Posterior vena cava (tissue), 2 donors: ENCODE measurements at regions of chrX and their contacts with region 1.

Region 1: GRCh38 chrX:87468941-87469340 is 48.7 kb upstream of the KLHL4 start:
- DNase-seq: no peak

Region 2: DNA sequence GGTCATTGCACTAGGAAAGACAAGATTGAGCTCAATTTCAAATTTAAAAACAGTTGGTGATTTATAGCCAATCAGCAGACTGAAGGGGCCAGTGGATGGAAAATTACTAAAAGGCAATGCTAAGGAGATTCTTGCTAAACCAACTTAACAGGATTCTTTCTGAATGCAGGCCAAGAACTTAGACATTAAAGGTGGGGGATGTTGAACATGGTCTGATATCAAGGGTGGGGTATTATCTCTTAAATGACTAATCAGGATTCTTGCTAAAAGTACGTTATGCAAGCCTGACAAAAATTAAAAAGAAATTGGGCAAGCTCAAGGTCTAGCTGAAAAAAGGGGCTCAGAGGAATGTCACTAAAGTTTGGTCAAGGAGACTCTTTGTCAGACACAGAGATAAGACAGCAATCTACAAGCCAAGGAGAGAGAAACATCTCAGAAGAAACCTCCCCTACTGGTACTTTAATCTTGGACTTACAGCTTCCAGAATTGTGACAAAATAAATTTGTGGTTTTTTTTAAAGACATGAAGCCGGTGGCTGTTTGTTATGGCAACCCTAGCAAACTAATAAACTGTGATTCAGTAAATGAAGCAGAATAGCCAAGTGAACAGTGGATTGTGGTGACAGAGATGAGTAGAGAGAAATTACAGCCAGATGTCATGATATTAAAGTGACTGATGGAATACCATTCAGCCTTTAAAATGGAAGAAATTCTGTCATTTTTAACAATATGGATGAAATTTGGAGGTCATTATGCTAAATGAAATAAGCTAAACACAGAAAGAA is 71.6 kb before region 1 on chrX:
- intact Hi-C with region 1: loop called in 1 of 2 experiments (anchors 2 kb)
- DNase-seq: no peak

Region 3: GRCh38 chrX:87516717-87517121 is 47.8 kb after region 1 on chrX:
- intact Hi-C with region 1: loop called in 1 of 2 experiments (anchors 2 kb)
- DNase-seq: no peak